ENCODE measurements at regions of chr20 and their contacts with region 1.

Region 1: GRCh38 chr20:62143118-62143973 is at the starts of genes PSMA7 and SS18L1:
- DNase-seq: peak; percentile 94
- ATAC-seq: peak; percentile 90
- H3K4me3 ChIP-seq: peak within 1 kb of the TSS; percentile 54 to 88 (median 63)
- H3K4me3 Mint-ChIP-seq: peak within 1 kb of the TSS; percentile 91
- H3K27ac ChIP-seq: peak within 1 kb of the TSS; percentile 63 to 75
- H3K27ac Mint-ChIP-seq: peak within 1 kb of the TSS; percentile 92
- H3K4me1 ChIP-seq: peaks cover 24 to 29% of the 10 kb centered on the region in 2 donors
- H3K4me1 Mint-ChIP-seq: peaks cover 40% of the 10 kb centered on the region
- H3K27me3 ChIP-seq: no peaks in the 10 kb centered on the region
- H3K27me3 Mint-ChIP-seq: no peaks in the 10 kb centered on the region
- CTCF ChIP-seq: no peak
- total RNA-seq, gene PSMA7: 140 TPM in 2 replicates
- total RNA-seq, gene SS18L1: 20.7 and 22.0 TPM in 2 replicates

Region 2: GRCh38 chr20:61370841-61371303 is 772.5 kb before region 1 on chr20:
- CTCF ChIA-PET with region 1: no interaction called
- POLR2A ChIA-PET with region 1: no interaction called
- intact Hi-C with region 1: no loop called
- DNase-seq: no peak
- ATAC-seq: no peak
- H3K4me3 ChIP-seq: no peak overlapping the region
- H3K4me3 Mint-ChIP-seq: no peak overlapping the region
- H3K27ac ChIP-seq: no peak overlapping the region
- H3K27ac Mint-ChIP-seq: no peak overlapping the region
- H3K4me1 ChIP-seq: no peaks in the 10 kb centered on the region
- H3K4me1 Mint-ChIP-seq: no peaks in the 10 kb centered on the region
- H3K27me3 ChIP-seq: no peaks in the 10 kb centered on the region
- H3K27me3 Mint-ChIP-seq: no peaks in the 10 kb centered on the region
- CTCF ChIP-seq: no peak

Region 3: DNA sequence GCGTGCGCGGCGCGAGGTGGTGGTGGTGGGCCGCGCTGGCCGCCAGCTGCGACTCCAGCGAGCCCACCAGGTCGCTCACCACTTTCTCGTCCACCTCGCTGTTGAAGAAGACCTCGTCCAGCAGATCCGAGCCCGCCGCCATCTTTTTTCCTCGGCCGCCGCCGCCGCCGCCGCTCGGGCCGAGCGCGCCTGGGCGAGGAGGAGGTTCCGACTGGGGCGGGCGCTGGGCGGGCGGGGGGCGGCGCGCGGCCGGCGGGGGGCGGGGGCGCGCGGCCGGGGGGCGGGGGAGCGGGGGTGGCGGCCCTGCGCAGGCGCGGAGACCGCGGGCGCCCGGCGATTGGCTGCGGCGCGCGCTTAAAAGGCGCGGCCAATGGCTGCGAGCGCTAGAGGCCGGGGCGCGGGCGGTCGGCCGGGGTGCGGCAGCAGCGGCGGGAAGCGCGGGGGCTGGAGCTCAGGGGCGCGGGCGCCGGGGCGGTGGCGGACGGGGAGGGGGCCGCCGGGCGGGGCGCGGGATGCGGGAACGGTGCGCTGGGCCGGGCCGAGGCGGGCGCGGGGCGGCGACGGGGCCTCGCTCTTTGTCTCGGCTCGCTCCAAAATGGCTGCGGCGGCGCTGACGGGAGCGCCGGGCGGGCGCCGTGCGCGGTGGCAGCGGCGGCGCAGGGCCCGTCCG is 77.5 kb before region 1 on chr20 and contains the start of gene TAF4:
- CTCF ChIA-PET with region 1: interaction called, 5 read pairs
- POLR2A ChIA-PET with region 1: interaction called, 5 read pairs
- intact Hi-C with region 1: loop called (anchors 5 kb)
- DNase-seq: peak; percentile 87
- ATAC-seq: peak; percentile 76
- H3K4me3 ChIP-seq: peak within 1 kb of the TSS; percentile 42 to 88 (median 75)
- H3K4me3 Mint-ChIP-seq: peak within 1 kb of the TSS; percentile 93
- H3K27ac ChIP-seq: peak within 1 kb of the TSS; percentile 8 to 72
- H3K27ac Mint-ChIP-seq: peak within 1 kb of the TSS; percentile 92
- H3K4me1 ChIP-seq: peaks cover 31 to 33% of the 10 kb centered on the region in 2 donors
- H3K4me1 Mint-ChIP-seq: peaks cover 45% of the 10 kb centered on the region
- H3K27me3 ChIP-seq: peaks cover 0 to 8% (median 0%) of the 10 kb centered on the region in 4 experiments
- H3K27me3 Mint-ChIP-seq: no peaks in the 10 kb centered on the region
- CTCF ChIP-seq: no peak
- total RNA-seq, gene TAF4: 36.9 and 39.5 TPM in 2 replicates

Region 4: DNA sequence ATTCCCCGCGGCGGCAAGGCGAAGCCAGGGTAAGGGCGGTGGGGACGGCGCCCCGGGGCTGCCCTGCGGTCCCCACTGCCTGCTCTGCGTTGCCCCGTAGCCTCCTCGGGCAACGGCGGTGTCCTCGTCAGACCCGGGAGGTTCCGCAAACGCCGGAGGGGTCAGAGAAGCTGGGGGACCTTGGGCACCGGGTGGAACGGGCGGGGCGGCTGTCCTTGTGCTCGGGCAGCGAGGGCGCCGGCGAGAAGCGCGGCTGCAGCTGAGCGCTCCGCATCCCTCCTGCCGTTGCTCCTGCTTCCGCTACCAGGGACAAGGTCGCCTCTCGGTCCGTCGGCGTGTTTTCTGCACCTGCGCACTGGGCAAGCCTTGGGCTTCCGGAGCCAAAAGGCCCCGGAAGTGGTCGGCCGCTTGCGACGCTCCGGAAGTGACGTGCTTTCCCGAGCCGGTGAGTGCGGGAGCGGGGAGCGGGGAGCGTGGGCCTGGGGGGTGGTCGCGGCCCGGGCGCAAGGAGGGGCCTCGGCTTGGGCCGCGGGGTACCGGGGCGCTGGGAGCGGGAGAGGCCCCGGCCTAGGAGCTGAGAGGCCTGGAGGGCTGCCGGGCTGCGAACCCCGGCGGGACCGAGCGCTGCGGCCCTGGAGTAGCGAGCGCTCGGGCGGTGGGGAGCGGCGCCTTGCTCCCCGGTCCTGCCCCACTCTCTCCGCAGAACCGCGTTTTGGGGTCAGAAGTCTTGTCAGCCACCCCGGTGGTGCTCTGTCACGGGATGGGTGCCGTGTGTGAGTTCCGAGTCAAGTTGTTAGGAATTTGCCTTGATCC is 39.5 kb after region 1 on chr20 and contains the start of gene MTG2:
- CTCF ChIA-PET with region 1: no interaction called
- POLR2A ChIA-PET with region 1: no interaction called
- intact Hi-C with region 1: loop called (anchors 1 kb)
- DNase-seq: peak; percentile 96
- ATAC-seq: peak; percentile 90
- H3K4me3 ChIP-seq: peak within 1 kb of the TSS; percentile 81 to 88 (median 84)
- H3K4me3 Mint-ChIP-seq: peak within 1 kb of the TSS; percentile 97
- H3K27ac ChIP-seq: peak within 1 kb of the TSS; percentile 86 to 97
- H3K27ac Mint-ChIP-seq: peak within 1 kb of the TSS; percentile 98
- H3K4me1 ChIP-seq: peaks cover 13 to 18% of the 10 kb centered on the region in 2 donors
- H3K4me1 Mint-ChIP-seq: peaks cover 39% of the 10 kb centered on the region
- H3K27me3 ChIP-seq: no peaks in the 10 kb centered on the region
- H3K27me3 Mint-ChIP-seq: no peaks in the 10 kb centered on the region
- CTCF ChIP-seq: no peak
- total RNA-seq, gene MTG2: 47.6 and 48.4 TPM in 2 replicates

Measured in B cell (primary cell).